HEK293T (cell line): ENCODE measurements at regions of chr6 and their contacts with region 1.

Region 1: DNA sequence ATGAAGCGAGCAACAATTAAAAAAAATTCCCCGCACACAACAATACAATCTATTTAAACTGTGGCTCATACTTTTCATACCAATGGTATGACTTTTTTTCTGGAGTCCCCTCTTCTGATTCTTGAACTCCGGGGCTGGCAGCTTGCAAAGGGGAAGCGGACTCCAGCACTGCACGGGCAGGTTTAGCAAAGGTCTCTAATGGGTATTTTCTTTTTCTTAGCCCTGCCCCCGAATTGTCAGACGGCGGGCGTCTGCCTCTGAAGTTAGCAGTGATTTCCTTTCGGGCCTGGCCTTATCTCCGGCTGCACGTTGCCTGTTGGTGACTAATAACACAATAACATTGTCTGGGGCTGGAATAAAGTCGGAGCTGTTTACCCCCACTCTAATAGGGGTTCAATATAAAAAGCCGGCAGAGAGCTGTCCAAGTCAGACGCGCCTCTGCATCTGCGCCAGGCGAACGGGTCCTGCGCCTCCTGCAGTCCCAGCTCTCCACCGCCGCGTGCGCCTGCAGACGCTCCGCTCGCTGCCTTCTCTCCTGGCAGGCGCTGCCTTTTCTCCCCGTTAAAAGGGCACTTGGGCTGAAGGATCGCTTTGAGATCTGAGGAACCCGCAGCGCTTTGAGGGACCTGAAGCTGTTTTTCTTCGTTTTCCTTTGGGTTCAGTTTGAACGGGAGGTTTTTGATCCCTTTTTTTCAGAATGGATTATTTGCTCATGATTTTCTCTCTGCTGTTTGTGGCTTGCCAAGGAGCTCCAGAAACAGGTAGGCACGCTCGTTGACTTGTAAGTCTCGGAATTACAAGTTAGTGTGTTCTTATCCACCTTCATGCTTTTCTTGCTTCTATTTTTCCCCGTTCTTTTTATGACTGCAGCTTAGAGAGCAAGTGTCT is at the start of gene EDN1:
- DNase-seq: peak; percentile 77

Region 2: GRCh38 chr6:11585426-11586016 is 704.7 kb before region 1 on chr6:
- CTCF ChIA-PET with region 1: interaction called, 13 read pairs
- POLR2A ChIA-PET with region 1: no interaction called
- DNase-seq: peak; percentile 20

Region 3: DNA sequence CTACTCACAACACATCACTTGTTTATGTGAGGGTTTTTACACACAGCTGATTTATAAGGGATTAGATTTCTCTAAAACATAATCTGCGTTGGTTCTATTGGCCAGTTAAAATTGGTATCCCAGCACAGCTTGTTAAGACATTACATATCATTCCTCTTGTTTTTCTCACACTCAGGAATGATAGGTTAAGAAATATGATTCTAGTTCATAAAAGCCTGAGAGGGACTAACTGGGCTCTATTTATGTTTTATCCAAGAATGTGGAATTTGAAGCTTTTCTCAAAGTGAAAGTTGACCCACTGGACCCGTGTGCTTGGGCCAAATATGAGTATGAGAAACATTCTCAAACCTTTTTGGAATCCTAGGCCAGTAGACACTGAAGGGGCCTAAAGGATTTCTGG is 635.3 kb before region 1 on chr6:
- CTCF ChIA-PET with region 1: interaction called, 16 read pairs
- POLR2A ChIA-PET with region 1: no interaction called
- DNase-seq: no peak

Region 4: DNA sequence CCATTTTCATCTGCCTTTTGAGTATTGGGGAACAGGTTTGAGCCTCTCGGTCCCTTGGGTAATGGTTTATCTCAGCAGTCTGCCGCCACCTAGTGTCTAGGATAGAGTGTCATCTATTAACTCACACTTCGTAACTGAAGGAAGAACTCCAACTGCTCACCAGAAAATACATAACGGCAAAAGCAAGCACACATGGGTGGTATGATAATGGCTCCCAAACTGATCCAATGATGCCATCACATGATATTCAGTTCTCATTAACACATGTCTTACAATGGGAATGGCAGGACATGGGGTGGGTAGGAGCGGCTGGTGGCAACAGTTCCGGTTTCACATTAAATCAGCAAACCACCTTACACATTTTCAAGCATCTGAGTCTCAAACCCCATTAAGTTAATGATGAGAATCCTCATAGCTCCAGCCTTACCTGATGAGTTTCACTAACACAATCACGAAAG is 315.7 kb after region 1 on chr6:
- CTCF ChIA-PET with region 1: interaction called, 53 read pairs
- POLR2A ChIA-PET with region 1: no interaction called
- DNase-seq: peak; percentile 51